ENCODE measurements at regions of chr18 and their contacts with region 1.

Region 1: GRCh38 chr18:24600076-24600654 is 139.7 kb downstream of the HRH4 start:
- DNase-seq: peak; percentile 18
- ATAC-seq: no peak
- H3K4me3 Mint-ChIP-seq: no peak overlapping the region
- H3K27ac Mint-ChIP-seq: no peak overlapping the region
- H3K4me1 Mint-ChIP-seq: no peaks in the 10 kb centered on the region
- H3K27me3 Mint-ChIP-seq: peaks cover 14% of the 10 kb centered on the region
- CTCF ChIP-seq: peak; percentile 77

Region 2: DNA sequence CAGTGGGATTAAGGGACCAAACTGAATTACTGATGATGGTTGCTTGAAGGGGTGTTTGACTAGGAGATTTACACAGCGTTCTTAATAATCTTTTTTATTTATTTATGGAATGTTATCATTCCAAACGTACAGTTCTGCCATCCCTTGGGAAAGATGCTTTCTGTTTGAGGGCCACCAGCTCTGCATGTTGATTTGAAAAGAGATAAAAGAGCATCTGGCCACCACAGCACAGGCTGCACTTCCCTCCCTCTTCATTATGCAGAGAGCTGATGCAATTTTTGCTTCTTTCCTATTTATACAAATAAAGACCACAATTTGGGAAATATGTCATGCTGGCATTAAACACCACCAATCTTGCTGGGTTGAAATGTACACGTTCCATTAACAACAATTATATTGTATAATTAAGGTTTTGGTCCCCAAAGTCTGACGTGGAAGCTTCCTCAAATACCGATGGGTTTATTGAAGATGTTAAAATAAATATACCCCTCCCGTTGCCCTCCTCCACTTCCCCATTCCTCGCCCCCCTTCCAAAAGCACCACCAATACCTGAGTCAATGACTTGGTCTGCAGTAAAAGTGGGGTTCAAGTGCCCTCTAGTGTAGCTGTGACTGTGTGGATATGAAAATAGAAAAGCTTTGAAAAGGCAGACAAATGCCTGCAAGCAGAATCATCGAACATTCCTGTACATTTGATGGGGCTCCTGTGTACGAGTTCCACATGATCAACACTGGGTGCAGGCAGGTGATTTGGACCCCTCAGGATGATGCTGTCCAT is 72.2 kb after region 1 on chr18:
- CTCF ChIA-PET with region 1: interaction called, 12 read pairs
- POLR2A ChIA-PET with region 1: no interaction called
- intact Hi-C with region 1: no loop called
- DNase-seq: peak; percentile 7
- ATAC-seq: no peak
- H3K4me3 Mint-ChIP-seq: no peak overlapping the region
- H3K27ac Mint-ChIP-seq: no peak overlapping the region
- H3K4me1 Mint-ChIP-seq: peaks cover 6% of the 10 kb centered on the region
- H3K27me3 Mint-ChIP-seq: peaks cover 3% of the 10 kb centered on the region
- CTCF ChIP-seq: no peak